Common myeloid progenitor, CD34-positive (primary cell): ENCODE measurements at regions of chr17 and their contacts with region 1.

Region 1: GRCh38 chr17:5696646-5697045 is 112.3 kb upstream of the NLRP1 start:
- DNase-seq: no peak
- H3K4me3 ChIP-seq: no peak overlapping the region
- H3K27ac ChIP-seq: no peak overlapping the region
- H3K4me1 ChIP-seq: no peaks in the 10 kb centered on the region
- H3K27me3 ChIP-seq: peaks cover 4 to 39% (median 5%) of the 10 kb centered on the region in 5 experiments

Region 2: GRCh38 chr17:5706577-5707216 is 10.1 kb after region 1 on chr17:
- CTCF ChIA-PET with region 1: interaction called, 15 read pairs
- POLR2A ChIA-PET with region 1: no interaction called
- DNase-seq: peak; percentile 44 to 75 (median 65)
- H3K4me3 ChIP-seq: no peak overlapping the region
- H3K27ac ChIP-seq: no peak overlapping the region
- H3K4me1 ChIP-seq: no peaks in the 10 kb centered on the region
- H3K27me3 ChIP-seq: peaks cover 2 to 17% (median 3%) of the 10 kb centered on the region in 5 experiments

Region 3: GRCh38 chr17:5730373-5730772 is 33.7 kb after region 1 on chr17:
- CTCF ChIA-PET with region 1: no interaction called
- POLR2A ChIA-PET with region 1: no interaction called
- DNase-seq: no peak
- H3K4me3 ChIP-seq: no peak overlapping the region
- H3K27ac ChIP-seq: no peak overlapping the region
- H3K4me1 ChIP-seq: no peaks in the 10 kb centered on the region
- H3K27me3 ChIP-seq: peaks cover 0 to 15% (median 3%) of the 10 kb centered on the region in 5 experiments